ENCODE measurements at regions of chr10 and their contacts with region 1.

Region 1: DNA sequence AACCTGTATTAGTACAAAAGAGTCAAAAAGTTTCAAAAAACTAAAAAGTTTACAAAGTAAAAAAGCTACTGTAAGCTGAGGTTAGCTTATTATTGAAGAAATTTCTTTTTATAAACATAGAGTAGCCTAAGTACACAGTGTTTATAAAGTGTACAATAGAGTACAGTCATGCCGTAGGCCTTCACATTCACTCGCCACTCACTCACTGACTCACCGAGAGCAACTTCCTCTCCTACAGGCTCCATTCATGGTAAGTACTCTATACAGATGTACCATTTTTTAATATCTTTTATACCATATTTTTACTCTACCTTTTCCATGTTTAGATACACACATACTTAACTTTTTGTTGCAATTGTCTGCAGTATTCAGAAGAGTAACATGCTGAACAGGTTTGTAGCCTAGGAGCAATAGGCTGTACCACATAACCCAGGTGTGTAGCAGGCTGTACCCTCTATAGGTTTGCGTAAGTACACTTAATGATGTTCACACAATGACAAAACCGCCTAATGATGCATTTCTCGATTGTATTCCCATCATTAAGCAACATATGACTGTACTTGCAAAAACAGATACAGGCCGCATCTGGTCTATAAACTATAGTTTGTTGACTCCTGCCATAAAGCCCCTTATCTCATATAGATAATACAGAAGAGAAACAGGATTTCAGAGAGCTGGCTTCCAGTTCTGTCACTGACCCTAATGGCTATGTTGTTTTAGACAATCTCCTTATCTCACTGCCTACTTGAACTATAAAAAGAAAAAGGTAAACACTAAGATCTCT is 438.8 kb downstream of the HTR7 start:
- DNase-seq: no peak
- ATAC-seq: no peak
- H3K4me3 ChIP-seq: no peak overlapping the region
- H3K27ac ChIP-seq: no peak overlapping the region
- H3K4me1 ChIP-seq: no peaks in the 10 kb centered on the region
- H3K27me3 ChIP-seq: no peaks in the 10 kb centered on the region
- CTCF ChIP-seq: no peak

Region 2: DNA sequence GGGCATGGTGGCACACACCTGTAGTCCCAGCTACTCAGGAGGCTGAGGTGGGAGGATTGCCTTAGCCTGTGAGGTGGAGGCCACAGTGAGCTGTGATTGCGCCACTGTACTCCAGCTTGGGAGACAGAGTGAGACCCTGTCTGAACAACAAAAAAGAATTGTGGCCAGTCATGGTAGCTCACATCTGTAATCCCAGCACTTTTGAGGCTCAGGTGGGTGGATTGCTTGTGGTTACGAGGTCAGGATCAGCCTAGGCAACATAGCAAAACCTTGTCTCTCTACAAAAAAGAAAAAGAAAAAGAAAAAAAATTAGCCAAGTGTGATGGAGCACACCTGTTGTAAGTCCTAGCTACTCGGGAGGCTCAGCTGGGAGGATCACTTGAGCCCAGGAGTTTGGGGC is 1894.7 kb after region 1 on chr10:
- intact Hi-C with region 1: loop called in 1 of 2 experiments (anchors 10 kb)
- DNase-seq: no peak
- ATAC-seq: no peak
- H3K4me3 ChIP-seq: no peak overlapping the region
- H3K27ac ChIP-seq: no peak overlapping the region
- H3K4me1 ChIP-seq: no peaks in the 10 kb centered on the region
- H3K27me3 ChIP-seq: no peaks in the 10 kb centered on the region
- CTCF ChIP-seq: no peak

Measured in psoas muscle (tissue), 8 donors.